Heart right ventricle (tissue), 16 donors: ENCODE measurements at regions of chr5 and their contacts with region 1.

Region 1: DNA sequence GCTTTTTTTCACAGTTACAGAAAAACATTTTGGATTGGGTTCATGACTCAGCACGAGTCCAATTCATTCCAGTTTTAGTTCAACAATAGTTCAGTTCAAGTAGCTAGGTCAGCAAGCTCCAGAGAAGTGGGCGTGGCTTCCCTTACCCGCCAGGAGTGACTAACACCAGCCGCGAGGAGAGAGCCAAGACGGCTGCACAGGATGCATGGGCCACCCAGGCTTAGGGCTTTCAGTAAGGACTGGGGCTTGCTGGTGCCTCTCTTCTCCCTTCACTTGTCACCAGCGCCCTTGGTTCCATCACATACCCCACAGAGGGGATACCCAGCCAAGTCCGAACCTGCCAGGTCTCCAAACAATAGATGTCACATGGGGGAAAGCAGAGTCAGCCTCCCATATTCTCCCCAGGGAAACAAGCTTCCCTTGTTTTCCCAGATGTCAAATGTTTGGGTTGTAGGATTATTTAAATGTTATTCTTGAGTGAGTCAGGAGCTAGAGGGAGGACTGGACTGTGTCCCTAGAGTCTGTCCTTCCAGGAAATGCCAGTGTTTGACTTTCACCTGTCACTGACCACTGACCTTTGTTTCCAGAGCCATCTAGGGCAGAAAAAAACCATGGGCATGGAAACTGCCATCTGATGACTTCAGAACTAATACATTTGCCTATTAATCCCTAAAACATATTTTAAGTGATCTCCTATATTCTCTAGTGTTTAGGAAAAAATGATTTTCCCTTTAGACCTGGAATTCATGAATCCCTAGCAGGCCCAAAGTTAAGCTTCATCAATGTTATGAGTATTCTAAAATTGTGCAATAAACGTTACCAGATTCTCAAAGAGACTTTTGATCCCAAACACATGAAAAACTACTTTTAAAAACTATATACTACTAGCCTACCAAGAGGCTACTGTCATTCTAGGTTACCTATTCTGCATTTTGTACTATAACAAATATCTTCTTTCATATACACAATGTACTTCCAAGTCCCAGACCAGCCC is 51.9 kb downstream of the NIPAL4 start:
- DNase-seq: peak; percentile 86 to 95
- ATAC-seq: peak; percentile 88 to 97 (median 94)
- H3K4me3 ChIP-seq: no peak overlapping the region
- H3K27ac ChIP-seq: peak overlapping the region in 9 of 10 donors; percentile 50 to 85 (median 76)
- H3K4me1 ChIP-seq: peaks cover 8 to 69% (median 51%) of the 10 kb centered on the region in 9 donors
- H3K27me3 ChIP-seq: no peaks in the 10 kb centered on the region
- CTCF ChIP-seq: no peak

Region 2: GRCh38 chr5:157563373-157563928 is 51.5 kb after region 1 on chr5:
- intact Hi-C with region 1: loop called in 4 of 10 experiments (anchors 2 to 10 kb)
- DNase-seq: peak in 1 of 2 donors; percentile 57
- ATAC-seq: peak in 7 of 8 donors; percentile 6 to 75 (median 36)
- H3K4me3 ChIP-seq: peak overlapping the region in 4 of 10 donors; percentile 6 to 19 (median 9)
- H3K27ac ChIP-seq: peak overlapping the region in 9 of 10 donors; percentile 43 to 89 (median 78)
- H3K4me1 ChIP-seq: peaks cover 32 to 99% (median 70%) of the 10 kb centered on the region in 9 donors
- H3K27me3 ChIP-seq: no peaks in the 10 kb centered on the region
- CTCF ChIP-seq: no peak

Region 3: DNA sequence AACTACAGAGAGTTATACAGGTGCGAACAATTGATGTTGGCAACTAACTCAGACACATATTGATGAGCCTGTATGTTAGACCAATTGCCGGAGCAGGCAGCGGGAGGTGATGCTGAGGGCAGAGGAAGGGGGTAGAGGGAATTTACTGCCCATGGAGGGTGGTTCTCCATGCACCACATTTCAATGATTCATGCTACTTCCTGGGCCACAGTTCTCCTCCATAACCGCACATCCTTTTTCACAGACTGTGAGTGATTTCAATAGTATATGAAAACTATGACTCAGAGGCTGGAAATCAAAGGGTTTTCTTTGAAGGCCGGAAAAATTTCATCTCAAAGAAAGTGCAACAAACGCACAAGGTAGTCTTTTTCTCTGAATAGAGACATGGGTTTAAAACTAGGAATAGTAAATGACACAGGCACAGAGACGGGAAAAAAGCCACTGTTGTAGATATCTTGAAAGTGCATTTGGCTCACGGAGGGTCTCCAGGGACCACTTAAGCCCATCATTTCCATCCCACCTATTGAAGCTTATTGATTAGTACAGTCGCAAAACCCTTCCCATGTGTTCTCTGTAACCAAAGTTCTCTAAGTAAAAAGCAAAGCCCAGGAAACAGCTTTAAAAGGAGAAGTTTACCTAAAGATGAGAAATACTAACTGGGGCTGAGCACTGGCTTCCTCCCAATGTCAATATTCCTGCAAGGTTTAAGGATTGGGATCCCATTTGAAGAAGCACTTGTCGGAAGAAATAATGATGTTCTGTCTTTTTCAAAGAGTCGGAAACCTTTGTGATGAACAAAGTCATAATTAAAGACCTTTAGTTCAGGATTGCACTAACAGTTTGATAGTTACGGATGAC is 91.6 kb after region 1 on chr5:
- intact Hi-C with region 1: no loop called
- DNase-seq: no peak
- ATAC-seq: peak in 5 of 8 donors; percentile 25 to 57 (median 49)
- H3K4me3 ChIP-seq: no peak overlapping the region
- H3K27ac ChIP-seq: peak overlapping the region in 1 of 10 donors; percentile 18
- H3K4me1 ChIP-seq: peaks cover 0 to 41% (median 0%) of the 10 kb centered on the region in 9 donors
- H3K27me3 ChIP-seq: no peaks in the 10 kb centered on the region
- CTCF ChIP-seq: no peak